GM12878 (cell line): ENCODE measurements at regions of chr18 and their contacts with region 1.

Region 1: GRCh38 chr18:21955757-21956652 is 213.4 kb upstream of the GATA6 start:
- DNase-seq: peak; percentile 4
- ATAC-seq: peak; percentile 100
- H3K4me3 ChIP-seq: no peak overlapping the region
- H3K27ac ChIP-seq: no peak overlapping the region
- H3K4me1 ChIP-seq: no peaks in the 10 kb centered on the region
- H3K27me3 ChIP-seq: no peaks in the 10 kb centered on the region
- CTCF ChIP-seq: peak; percentile 86 to 94 (median 92)
- EP300 ChIP-seq: no peak
- POLR2A ChIP-seq: no peak
- RAD21 ChIP-seq: peak; percentile 73

Region 2: GRCh38 chr18:21820035-21820810 is 135.8 kb before region 1 on chr18:
- CTCF ChIA-PET with region 1: interaction called, 5 read pairs
- POLR2A ChIA-PET with region 1: no interaction called
- RAD21 ChIA-PET with region 1: no interaction called
- SMC1A ChIA-PET with region 1: interaction called, 3 read pairs
- in situ Hi-C with region 1: no loop called
- intact Hi-C with region 1: loop called (anchors 5 kb)
- DNase-seq: no peak
- ATAC-seq: no peak
- H3K4me3 ChIP-seq: no peak overlapping the region
- H3K27ac ChIP-seq: no peak overlapping the region
- H3K4me1 ChIP-seq: no peaks in the 10 kb centered on the region
- H3K27me3 ChIP-seq: no peaks in the 10 kb centered on the region
- CTCF ChIP-seq: peak in 2 of 3 experiments; percentile 44 to 45; a peak in 5 of 6 replicates
- EP300 ChIP-seq: no peak
- POLR2A ChIP-seq: no peak
- RAD21 ChIP-seq: peak; percentile 52

Region 3: GRCh38 chr18:21897811-21898210 is 58.2 kb before region 1 on chr18:
- CTCF ChIA-PET with region 1: interaction called, 5 read pairs
- POLR2A ChIA-PET with region 1: no interaction called
- RAD21 ChIA-PET with region 1: no interaction called
- SMC1A ChIA-PET with region 1: interaction called, 5 read pairs
- in situ Hi-C with region 1: loop called (anchors 5 kb)
- intact Hi-C with region 1: loop called (anchors 1 kb)
- DNase-seq: no peak
- ATAC-seq: peak; percentile 89
- H3K4me3 ChIP-seq: no peak overlapping the region
- H3K27ac ChIP-seq: no peak overlapping the region
- H3K4me1 ChIP-seq: no peaks in the 10 kb centered on the region
- H3K27me3 ChIP-seq: no peaks in the 10 kb centered on the region; a peak in 2 of 4 replicates
- CTCF ChIP-seq: peak; percentile 71 to 80 (median 79)
- EP300 ChIP-seq: no peak
- POLR2A ChIP-seq: no peak
- RAD21 ChIP-seq: peak; percentile 81

Region 4: GRCh38 chr18:21914739-21915319 is 41.2 kb before region 1 on chr18:
- CTCF ChIA-PET with region 1: interaction called, 7 read pairs
- POLR2A ChIA-PET with region 1: no interaction called
- RAD21 ChIA-PET with region 1: no interaction called
- SMC1A ChIA-PET with region 1: no interaction called
- in situ Hi-C with region 1: no loop called
- intact Hi-C with region 1: loop called (anchors 1 kb)
- DNase-seq: no peak
- ATAC-seq: 0 out of 3 replicates have a peak, but pooled peaks have one; percentile 44
- H3K4me3 ChIP-seq: no peak overlapping the region
- H3K27ac ChIP-seq: no peak overlapping the region
- H3K4me1 ChIP-seq: peaks cover 4% of the 10 kb centered on the region; the same call in 1 of the 2 replicates
- H3K27me3 ChIP-seq: no peaks in the 10 kb centered on the region
- CTCF ChIP-seq: peak; percentile 42 to 49 (median 44); a peak in 5 of 6 replicates
- EP300 ChIP-seq: no peak
- POLR2A ChIP-seq: no peak
- RAD21 ChIP-seq: peak; percentile 62

Region 5: DNA sequence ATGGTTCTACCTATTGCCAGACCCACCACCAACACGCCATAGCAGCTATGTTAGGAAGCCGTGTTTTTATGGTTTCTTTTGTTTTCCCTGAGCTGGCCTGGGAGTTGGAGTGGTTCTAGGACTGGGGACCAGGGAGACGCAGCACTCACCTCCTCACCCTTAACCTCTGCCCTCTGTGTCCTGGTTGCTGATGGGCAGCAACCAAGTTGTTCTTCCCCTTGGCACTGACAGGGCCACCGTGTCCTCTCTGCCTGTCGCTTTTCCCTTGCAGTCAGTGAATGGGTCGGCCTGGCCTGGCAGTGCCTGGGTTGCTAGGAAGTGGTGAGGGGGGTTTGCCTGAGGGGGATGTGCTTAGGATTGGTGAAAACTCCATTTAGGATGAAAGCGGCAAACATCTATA is 16.3 kb after region 1 on chr18:
- CTCF ChIA-PET with region 1: no interaction called
- POLR2A ChIA-PET with region 1: no interaction called
- RAD21 ChIA-PET with region 1: no interaction called
- SMC1A ChIA-PET with region 1: no interaction called
- in situ Hi-C with region 1: no loop called
- intact Hi-C with region 1: no loop called
- DNase-seq: no peak
- ATAC-seq: no peak
- H3K4me3 ChIP-seq: no peak overlapping the region
- H3K27ac ChIP-seq: no peak overlapping the region
- H3K4me1 ChIP-seq: no peaks in the 10 kb centered on the region
- H3K27me3 ChIP-seq: no peaks in the 10 kb centered on the region
- CTCF ChIP-seq: no peak
- EP300 ChIP-seq: no peak
- POLR2A ChIP-seq: no peak
- RAD21 ChIP-seq: no peak